ENCODE measurements at regions of chr22 and their contacts with region 1.

Region 1: GRCh38 chr22:33472462-33473344 is 414.5 kb upstream of the SYN3 start:
- DNase-seq: no peak
- H3K4me3 Mint-ChIP-seq: no peak overlapping the region
- H3K27ac Mint-ChIP-seq: no peak overlapping the region
- H3K4me1 Mint-ChIP-seq: peaks cover 29% of the 10 kb centered on the region
- H3K27me3 Mint-ChIP-seq: no peaks in the 10 kb centered on the region
- CTCF ChIP-seq: no peak

Region 2: DNA sequence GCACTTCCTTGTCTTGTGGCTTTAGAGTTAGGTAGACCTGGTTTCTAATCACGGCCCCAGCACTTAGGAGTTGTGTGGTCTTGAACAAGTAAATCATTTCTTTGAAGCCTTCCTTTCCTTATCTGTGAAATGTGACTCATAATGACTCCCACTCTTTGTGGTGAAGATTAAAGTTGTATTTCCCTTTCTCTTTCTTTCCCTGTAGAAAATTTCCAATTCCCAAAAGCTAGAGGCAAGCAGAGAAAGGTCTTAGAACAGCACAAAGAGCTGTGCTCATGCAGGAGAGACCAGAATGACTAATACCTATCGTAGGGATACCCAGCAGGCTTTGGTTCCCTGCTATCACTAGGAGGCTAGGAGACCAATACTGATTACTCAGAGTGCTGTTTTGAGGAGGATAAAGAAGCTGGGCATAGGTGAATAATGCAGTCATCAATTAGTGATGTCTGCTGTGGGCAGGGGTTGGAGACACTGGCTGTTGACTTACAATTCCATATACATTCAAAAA is 143.9 kb before region 1 on chr22:
- CTCF ChIA-PET with region 1: interaction called, 4 read pairs
- intact Hi-C with region 1: loop called (anchors 5 kb)
- DNase-seq: peak; percentile 69
- H3K4me3 Mint-ChIP-seq: peak overlapping the region; percentile 37
- H3K27ac Mint-ChIP-seq: peak overlapping the region; percentile 94
- H3K4me1 Mint-ChIP-seq: peaks cover 84% of the 10 kb centered on the region
- H3K27me3 Mint-ChIP-seq: no peaks in the 10 kb centered on the region
- CTCF ChIP-seq: no peak

Region 3: DNA sequence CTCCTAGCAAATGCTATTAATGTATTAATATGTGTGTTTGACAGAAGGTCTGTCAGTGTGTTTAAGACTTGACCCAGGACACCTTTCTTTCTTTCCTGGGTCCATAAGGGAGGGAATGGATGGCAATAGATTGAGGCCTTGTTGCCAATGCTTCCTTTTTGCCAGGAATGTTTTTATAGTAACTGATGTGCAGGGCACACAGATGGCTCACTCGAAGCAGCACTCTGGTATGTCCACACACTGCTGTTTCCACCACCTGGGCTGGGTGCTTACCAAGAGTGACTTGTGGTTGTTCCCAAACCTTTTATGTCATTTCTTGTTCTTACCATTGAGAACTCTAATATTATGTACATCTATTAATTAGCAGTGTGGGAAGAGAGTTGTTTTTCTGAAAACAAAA is 17.7 kb before region 1 on chr22:
- CTCF ChIA-PET with region 1: no interaction called
- intact Hi-C with region 1: no loop called
- DNase-seq: no peak
- H3K4me3 Mint-ChIP-seq: no peak overlapping the region
- H3K27ac Mint-ChIP-seq: no peak overlapping the region
- H3K4me1 Mint-ChIP-seq: no peaks in the 10 kb centered on the region
- H3K27me3 Mint-ChIP-seq: no peaks in the 10 kb centered on the region
- CTCF ChIP-seq: no peak

Region 4: DNA sequence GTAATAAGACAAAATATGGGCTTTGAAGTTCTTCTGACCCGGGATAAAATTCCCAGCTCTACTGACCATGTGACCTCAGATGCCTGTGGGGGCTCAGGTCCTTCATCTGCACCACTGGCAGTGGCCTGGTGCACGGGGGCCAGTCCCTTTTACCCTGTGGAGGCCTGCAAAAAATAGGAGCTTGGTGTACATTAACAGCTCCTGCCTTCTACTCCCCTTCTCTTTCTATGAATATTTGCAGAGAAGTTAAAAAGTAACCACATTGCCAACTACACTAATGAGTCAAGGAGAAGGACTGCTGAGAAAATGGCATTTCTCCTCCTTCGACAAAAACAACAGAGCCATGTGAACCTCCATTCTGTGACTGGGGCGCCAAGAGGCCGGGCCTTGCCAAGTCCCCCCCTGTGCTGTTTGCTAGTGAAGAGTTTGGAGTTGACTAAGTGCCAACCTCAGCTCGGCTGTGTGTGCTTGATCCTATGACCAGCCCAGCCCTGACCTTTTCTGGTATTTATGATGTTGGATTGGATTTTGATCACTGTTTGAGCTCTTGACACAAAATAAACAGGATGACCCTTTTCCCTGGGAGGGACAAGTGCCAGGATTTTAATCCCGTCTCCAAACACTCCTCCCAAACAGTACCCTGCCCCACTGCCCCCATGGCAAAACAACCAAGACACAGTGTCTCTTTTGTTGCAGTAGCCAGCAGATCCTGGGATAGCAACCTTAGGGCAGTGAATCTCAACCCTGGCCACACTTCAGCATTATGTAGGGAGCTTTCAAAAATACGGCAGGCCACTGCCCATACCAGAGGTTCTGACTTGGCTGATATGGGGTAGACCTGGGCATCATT is 67.4 kb after region 1 on chr22:
- CTCF ChIA-PET with region 1: interaction called, 10 read pairs
- intact Hi-C with region 1: no loop called
- DNase-seq: peak; percentile 81
- H3K4me3 Mint-ChIP-seq: peak overlapping the region; percentile 31
- H3K27ac Mint-ChIP-seq: peak overlapping the region; percentile 74
- H3K4me1 Mint-ChIP-seq: peaks cover 18% of the 10 kb centered on the region
- H3K27me3 Mint-ChIP-seq: no peaks in the 10 kb centered on the region
- CTCF ChIP-seq: no peak